Naive thymus-derived CD4-positive, alpha-beta T cell (primary cell): ENCODE measurements at regions of chr1 and their contacts with region 1.

Region 1: GRCh38 chr1:26378088-26378878 is 5.7 kb upstream of the ZNF683 start:
- DNase-seq: peak; percentile 47 to 77 (median 70)
- ATAC-seq: peak; percentile 98
- H3K4me3 ChIP-seq: peak overlapping the region; percentile 35
- H3K4me3 Mint-ChIP-seq: peak overlapping the region; percentile 64 to 85 (median 74)
- H3K27ac ChIP-seq: peak overlapping the region; percentile 56
- H3K27ac Mint-ChIP-seq: peak overlapping the region; percentile 48 to 93 (median 92)
- H3K4me1 ChIP-seq: peaks cover 57 to 64% of the 10 kb centered on the region in 2 donors
- H3K4me1 Mint-ChIP-seq: peaks cover 57 to 74% (median 70%) of the 10 kb centered on the region in 7 donors
- H3K27me3 ChIP-seq: no peaks in the 10 kb centered on the region
- H3K27me3 Mint-ChIP-seq: no peaks in the 10 kb centered on the region

Region 2: DNA sequence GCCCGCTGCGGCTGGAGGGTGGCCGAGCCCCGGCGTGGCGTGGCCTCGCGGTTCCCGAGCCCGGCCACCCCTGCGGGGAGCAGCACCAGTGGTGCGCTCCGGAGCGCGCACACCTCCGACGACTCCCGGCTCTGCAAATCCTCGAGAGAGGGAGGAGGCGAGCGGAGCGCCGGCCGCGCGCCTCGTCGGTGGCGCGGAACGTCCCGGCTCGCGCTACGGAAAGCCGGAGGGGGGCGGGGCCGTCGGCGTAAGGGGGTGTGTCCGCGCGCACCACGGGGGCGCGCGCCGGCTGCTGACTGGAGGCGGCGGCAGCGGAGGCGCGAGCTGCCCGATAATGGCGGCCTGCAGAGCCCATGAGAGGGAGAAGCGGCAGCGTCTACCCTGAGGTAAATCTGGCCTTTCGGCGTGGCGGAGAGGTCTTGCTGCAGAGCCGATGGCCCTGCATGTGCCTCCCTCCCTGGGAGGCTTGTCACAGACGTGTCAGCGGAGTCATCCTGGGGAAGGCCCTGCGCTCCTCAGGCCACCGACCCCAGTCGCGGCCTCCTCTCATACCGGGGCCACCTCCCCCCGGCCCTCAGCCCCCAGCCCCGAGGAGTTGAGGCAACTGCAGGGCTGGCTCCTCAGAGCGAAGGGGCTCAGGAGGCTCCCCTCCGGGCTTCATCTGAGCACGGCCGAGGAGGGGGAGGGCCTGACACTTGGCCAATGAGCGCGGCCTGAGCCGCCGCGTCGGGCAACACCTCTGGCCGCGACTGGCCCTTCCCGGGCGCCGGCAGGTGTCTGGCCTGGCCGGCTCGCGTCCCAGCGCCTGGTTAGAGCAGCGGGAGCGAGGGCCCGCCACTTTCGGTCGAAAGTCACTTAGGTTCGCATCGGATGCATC is 266.5 kb before region 1 on chr1 and contains the start of gene PDIK1L:
- CTCF ChIA-PET with region 1: no interaction called
- POLR2A ChIA-PET with region 1: no interaction called
- intact Hi-C with region 1: loop called in 1 of 2 experiments (anchors 5 kb)
- DNase-seq: peak; percentile 91 to 95 (median 94)
- ATAC-seq: peak; percentile 93
- H3K4me3 ChIP-seq: peak within 1 kb of the TSS; percentile 93
- H3K4me3 Mint-ChIP-seq: peak within 1 kb of the TSS; percentile 86 to 99 (median 93)
- H3K27ac ChIP-seq: peak within 1 kb of the TSS; percentile 84
- H3K27ac Mint-ChIP-seq: peak within 1 kb of the TSS; percentile 84 to 98 (median 92)
- H3K4me1 ChIP-seq: peaks cover 12 to 19% of the 10 kb centered on the region in 2 donors
- H3K4me1 Mint-ChIP-seq: peaks cover 6 to 44% (median 34%) of the 10 kb centered on the region in 7 donors
- H3K27me3 ChIP-seq: no peaks in the 10 kb centered on the region
- H3K27me3 Mint-ChIP-seq: no peaks in the 10 kb centered on the region
- total RNA-seq, gene PDIK1L: 9.1 to 29.6 (median 20.3) TPM

Region 3: DNA sequence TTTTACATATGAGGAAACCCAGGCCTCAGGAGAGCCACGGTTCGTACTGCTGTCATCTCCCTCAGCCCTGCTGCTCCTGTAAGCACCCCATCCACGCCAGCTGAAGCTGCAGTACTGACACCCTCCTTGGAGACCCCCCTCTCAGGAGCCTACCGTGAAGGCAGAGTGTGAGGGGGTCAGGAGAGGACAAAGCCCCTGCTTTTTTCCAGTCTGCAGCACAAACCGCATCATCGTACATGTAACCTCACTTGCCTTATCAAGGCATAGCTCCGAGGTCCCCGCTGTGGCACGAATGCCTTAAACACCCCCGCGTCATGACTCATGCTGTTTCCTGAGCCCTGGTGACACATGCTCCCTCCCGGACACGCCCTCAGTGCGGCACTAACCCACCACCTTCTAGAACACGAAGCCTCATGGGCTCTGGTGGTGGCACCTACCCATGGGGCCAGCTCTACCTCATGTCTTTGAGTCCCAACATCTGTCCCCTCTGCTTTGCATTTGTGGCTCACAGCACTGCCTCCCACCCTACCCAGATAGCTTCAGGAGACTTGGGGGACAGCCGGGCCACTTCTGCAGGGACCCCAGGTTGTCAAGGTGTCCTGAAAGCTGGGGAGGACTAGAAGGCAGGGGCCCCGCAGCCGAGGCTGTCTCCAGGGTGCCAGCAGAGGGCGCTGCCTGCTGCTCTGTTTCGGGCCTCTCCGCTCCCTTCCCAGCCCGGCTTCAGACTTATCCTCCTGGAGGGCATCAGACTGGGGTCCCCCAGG is 93.5 kb before region 1 on chr1:
- CTCF ChIA-PET with region 1: interaction called, 8 read pairs
- POLR2A ChIA-PET with region 1: interaction called, 24 read pairs
- intact Hi-C with region 1: loop called (anchors 1 to 5 kb)
- DNase-seq: peak; percentile 60 to 97 (median 87)
- ATAC-seq: peak; percentile 81
- H3K4me3 ChIP-seq: peak overlapping the region; percentile 18
- H3K4me3 Mint-ChIP-seq: peak overlapping the region; percentile 44 to 88 (median 76)
- H3K27ac ChIP-seq: peak overlapping the region; percentile 86
- H3K27ac Mint-ChIP-seq: peak overlapping the region; percentile 90 to 99 (median 97)
- H3K4me1 ChIP-seq: peaks cover 89 to 91% of the 10 kb centered on the region in 2 donors
- H3K4me1 Mint-ChIP-seq: peaks cover 62 to 94% (median 86%) of the 10 kb centered on the region in 7 donors
- H3K27me3 ChIP-seq: no peaks in the 10 kb centered on the region
- H3K27me3 Mint-ChIP-seq: no peaks in the 10 kb centered on the region

Region 4: GRCh38 chr1:26336477-26337205 is 41.6 kb before region 1 on chr1:
- CTCF ChIA-PET with region 1: no interaction called
- POLR2A ChIA-PET with region 1: no interaction called
- intact Hi-C with region 1: loop called in 1 of 2 experiments (anchors 5 kb)
- DNase-seq: peak; percentile 55 to 79 (median 74)
- ATAC-seq: peak; percentile 96
- H3K4me3 ChIP-seq: peak overlapping the region; percentile 65
- H3K4me3 Mint-ChIP-seq: peak overlapping the region; percentile 86 to 92 (median 89)
- H3K27ac ChIP-seq: peak overlapping the region; percentile 58
- H3K27ac Mint-ChIP-seq: peak overlapping the region in 2 of 9 donors; percentile 9 to 68
- H3K4me1 ChIP-seq: peaks cover 5 to 7% of the 10 kb centered on the region in 2 donors
- H3K4me1 Mint-ChIP-seq: peaks cover 0 to 13% (median 10%) of the 10 kb centered on the region in 7 donors
- H3K27me3 ChIP-seq: no peaks in the 10 kb centered on the region
- H3K27me3 Mint-ChIP-seq: peaks cover 0 to 23% (median 0%) of the 10 kb centered on the region in 5 donors

Region 5: GRCh38 chr1:26391450-26391849 is 13.2 kb after region 1 on chr1:
- CTCF ChIA-PET with region 1: interaction called, 14 read pairs
- POLR2A ChIA-PET with region 1: interaction called, 14 read pairs
- intact Hi-C with region 1: loop called in 1 of 2 experiments (anchors 1 kb)
- DNase-seq: peak in 5 of 9 donors; percentile 17 to 46 (median 43)
- ATAC-seq: peak; percentile 86
- H3K4me3 ChIP-seq: no peak overlapping the region
- H3K4me3 Mint-ChIP-seq: peak overlapping the region in 1 of 10 donors; percentile 55
- H3K27ac ChIP-seq: no peak overlapping the region
- H3K27ac Mint-ChIP-seq: peak overlapping the region in 2 of 9 donors; percentile 1 to 64
- H3K4me1 ChIP-seq: peaks cover 6 to 18% of the 10 kb centered on the region in 2 donors
- H3K4me1 Mint-ChIP-seq: peaks cover 8 to 49% (median 18%) of the 10 kb centered on the region in 7 donors
- H3K27me3 ChIP-seq: no peaks in the 10 kb centered on the region
- H3K27me3 Mint-ChIP-seq: peaks cover 0 to 14% (median 0%) of the 10 kb centered on the region in 5 donors